CD8-positive, alpha-beta T cell (primary cell): ENCODE measurements at regions of chr21 and their contacts with region 1.

Region 1: DNA sequence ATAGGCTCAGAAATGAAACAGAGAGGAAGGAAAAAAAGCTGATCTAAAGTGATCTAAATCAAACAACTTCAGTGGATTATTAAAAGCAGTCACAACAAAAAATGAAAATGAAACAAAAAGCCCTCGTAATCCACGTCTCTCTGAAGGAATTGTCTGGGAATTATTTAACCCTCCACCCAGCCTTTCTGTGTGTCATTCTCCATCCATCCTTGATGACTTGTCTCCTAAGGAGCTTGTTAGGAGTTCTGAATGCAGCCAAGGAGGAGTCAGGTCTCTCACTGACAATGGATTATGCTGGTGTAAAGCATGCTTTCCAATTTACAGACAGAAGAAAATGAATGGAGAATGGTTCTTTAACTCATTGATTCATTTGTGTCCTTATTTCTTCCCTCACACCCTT is 359.3 kb upstream of the RUNX1 start:
- DNase-seq: no peak
- ATAC-seq: no peak
- H3K4me3 ChIP-seq: no peak overlapping the region
- H3K4me3 Mint-ChIP-seq: no peak overlapping the region
- H3K27ac ChIP-seq: no peak overlapping the region
- H3K27ac Mint-ChIP-seq: no peak overlapping the region
- H3K4me1 ChIP-seq: no peaks in the 10 kb centered on the region
- H3K4me1 Mint-ChIP-seq: no peaks in the 10 kb centered on the region
- H3K27me3 ChIP-seq: no peaks in the 10 kb centered on the region
- H3K27me3 Mint-ChIP-seq: peaks cover 7% of the 10 kb centered on the region
- CTCF ChIP-seq: no peak

Region 2: DNA sequence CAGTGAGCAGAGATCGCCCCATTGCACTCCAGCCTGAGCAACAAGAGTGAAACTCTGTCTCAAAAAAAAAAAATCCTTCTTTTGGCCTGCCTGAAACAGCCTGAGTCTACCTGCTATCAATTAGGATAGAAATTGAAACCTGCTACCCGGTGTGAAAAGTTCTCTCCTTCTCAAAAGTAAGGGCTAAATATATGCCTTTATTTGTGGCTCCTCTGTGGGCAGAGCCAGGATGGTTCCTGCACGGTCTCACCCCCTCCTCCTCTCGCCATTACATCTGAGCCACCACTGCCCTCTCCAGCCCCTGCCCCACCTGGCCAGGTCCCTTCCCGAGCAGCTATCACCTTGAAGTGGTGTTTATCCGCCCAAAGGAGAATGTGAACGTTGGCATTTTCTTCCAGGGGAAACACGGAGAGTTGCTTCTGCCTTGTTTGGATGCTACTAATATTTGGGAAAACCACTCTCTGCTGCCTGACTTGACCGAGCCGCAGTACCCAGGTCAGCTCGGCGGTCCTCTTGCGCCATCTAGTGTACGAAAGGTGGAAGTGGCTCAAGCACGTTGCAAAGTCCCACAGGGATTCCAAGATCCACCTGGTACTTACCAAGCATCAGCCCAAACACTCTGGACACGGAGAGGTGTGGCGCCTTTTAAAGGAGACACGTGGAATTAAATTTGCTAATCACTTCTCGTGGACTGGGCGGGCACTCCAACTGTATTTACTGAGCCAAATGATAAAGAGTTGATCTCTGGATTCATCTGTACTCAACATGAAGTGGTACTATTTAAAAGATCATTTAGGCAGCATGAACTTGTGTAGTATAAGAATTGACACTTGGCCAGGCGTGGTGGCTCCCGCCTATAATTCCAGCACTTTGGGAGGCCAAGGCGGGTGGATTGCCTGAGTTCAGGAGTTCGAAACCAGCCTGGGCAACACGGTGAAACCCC is 620.0 kb after region 1 on chr21:
- CTCF ChIA-PET with region 1: no interaction called
- POLR2A ChIA-PET with region 1: no interaction called
- intact Hi-C with region 1: loop called in 1 of 2 experiments (anchors 5 kb)
- DNase-seq: peak; percentile 23 to 82 (median 66)
- ATAC-seq: peak; percentile 84
- H3K4me3 ChIP-seq: no peak overlapping the region
- H3K4me3 Mint-ChIP-seq: no peak overlapping the region
- H3K27ac ChIP-seq: no peak overlapping the region
- H3K27ac Mint-ChIP-seq: no peak overlapping the region
- H3K4me1 ChIP-seq: peaks cover 4% of the 10 kb centered on the region
- H3K4me1 Mint-ChIP-seq: peaks cover 2% of the 10 kb centered on the region
- H3K27me3 ChIP-seq: no peaks in the 10 kb centered on the region
- H3K27me3 Mint-ChIP-seq: no peaks in the 10 kb centered on the region
- CTCF ChIP-seq: peak; percentile 97